Panc1 (cell line): ENCODE measurements at regions of chr13 and their contacts with region 1.

Region 1: GRCh38 chr13:99766641-99767045 is 204.9 kb downstream of the ZIC5 start:
- DNase-seq: no peak
- ATAC-seq: no peak
- H3K4me3 ChIP-seq: no peak overlapping the region
- H3K27ac ChIP-seq: no peak overlapping the region
- H3K4me1 ChIP-seq: no peaks in the 10 kb centered on the region
- H3K27me3 ChIP-seq: no peaks in the 10 kb centered on the region
- CTCF ChIP-seq: no peak; the same call in 1 of the 2 replicates

Region 2: GRCh38 chr13:99656092-99656745 is 110.4 kb before region 1 on chr13:
- CTCF ChIA-PET with region 1: no interaction called
- POLR2A ChIA-PET with region 1: no interaction called
- in situ Hi-C with region 1: no loop called
- intact Hi-C with region 1: no loop called
- DNase-seq: peak; percentile 61
- ATAC-seq: peak; percentile 87
- H3K4me3 ChIP-seq: no peak overlapping the region
- H3K27ac ChIP-seq: peak overlapping the region; percentile 44; the same call in 1 of the 2 replicates
- H3K4me1 ChIP-seq: peaks cover 12% of the 10 kb centered on the region
- H3K27me3 ChIP-seq: no peaks in the 10 kb centered on the region
- CTCF ChIP-seq: peak; percentile 78

Region 3: GRCh38 chr13:99736541-99736940 is 30.1 kb before region 1 on chr13:
- CTCF ChIA-PET with region 1: interaction called, 10 read pairs
- POLR2A ChIA-PET with region 1: no interaction called
- in situ Hi-C with region 1: no loop called
- intact Hi-C with region 1: no loop called
- DNase-seq: no peak
- ATAC-seq: no peak
- H3K4me3 ChIP-seq: no peak overlapping the region
- H3K27ac ChIP-seq: no peak overlapping the region
- H3K4me1 ChIP-seq: no peaks in the 10 kb centered on the region
- H3K27me3 ChIP-seq: no peaks in the 10 kb centered on the region
- CTCF ChIP-seq: no peak